Mammary epithelial cell (primary cell): ENCODE measurements at regions of chr12 and their contacts with region 1.

Region 1: GRCh38 chr12:49580572-49581535 is 12.9 kb upstream of the MCRS1 start:
- DNase-seq: peak; percentile 71
- H3K4me3 ChIP-seq: no peak overlapping the region
- H3K27ac ChIP-seq: no peak overlapping the region
- H3K4me1 ChIP-seq: no peaks in the 10 kb centered on the region
- H3K27me3 ChIP-seq: no peaks in the 10 kb centered on the region
- CTCF ChIP-seq: peak; percentile 86 to 96

Region 2: GRCh38 chr12:49358483-49359141 is 222.2 kb before region 1 on chr12:
- CTCF ChIA-PET with region 1: interaction called, 6 read pairs
- dilution Hi-C with region 1: no loop called
- in situ Hi-C with region 1: no loop called
- intact Hi-C with region 1: loop called (anchors 1 kb)
- DNase-seq: peak; percentile 71
- H3K4me3 ChIP-seq: no peak overlapping the region
- H3K27ac ChIP-seq: peak overlapping the region; percentile 20
- H3K4me1 ChIP-seq: peaks cover 23% of the 10 kb centered on the region
- H3K27me3 ChIP-seq: no peaks in the 10 kb centered on the region
- CTCF ChIP-seq: peak; percentile 66 to 84

Region 3: GRCh38 chr12:49553512-49554088 is 27.3 kb before region 1 on chr12:
- CTCF ChIA-PET with region 1: interaction called, 3 read pairs
- dilution Hi-C with region 1: no loop called
- in situ Hi-C with region 1: no loop called
- intact Hi-C with region 1: loop called (anchors 1 kb)
- DNase-seq: peak; percentile 48
- H3K4me3 ChIP-seq: no peak overlapping the region
- H3K27ac ChIP-seq: no peak overlapping the region
- H3K4me1 ChIP-seq: peaks cover 13% of the 10 kb centered on the region
- H3K27me3 ChIP-seq: no peaks in the 10 kb centered on the region
- CTCF ChIP-seq: peak; percentile 78 to 85

Region 4: GRCh38 chr12:49673446-49674317 is 92.8 kb after region 1 on chr12:
- CTCF ChIA-PET with region 1: no interaction called
- dilution Hi-C with region 1: loop called (anchors 5 kb)
- in situ Hi-C with region 1: no loop called
- intact Hi-C with region 1: no loop called
- DNase-seq: peak; percentile 71
- H3K4me3 ChIP-seq: no peak overlapping the region
- H3K27ac ChIP-seq: peak overlapping the region; percentile 17
- H3K4me1 ChIP-seq: peaks cover 21% of the 10 kb centered on the region
- H3K27me3 ChIP-seq: no peaks in the 10 kb centered on the region
- CTCF ChIP-seq: peak; percentile 2 to 16